K562 (cell line): ENCODE measurements at regions of chr2 and their contacts with region 1.

Region 1: DNA sequence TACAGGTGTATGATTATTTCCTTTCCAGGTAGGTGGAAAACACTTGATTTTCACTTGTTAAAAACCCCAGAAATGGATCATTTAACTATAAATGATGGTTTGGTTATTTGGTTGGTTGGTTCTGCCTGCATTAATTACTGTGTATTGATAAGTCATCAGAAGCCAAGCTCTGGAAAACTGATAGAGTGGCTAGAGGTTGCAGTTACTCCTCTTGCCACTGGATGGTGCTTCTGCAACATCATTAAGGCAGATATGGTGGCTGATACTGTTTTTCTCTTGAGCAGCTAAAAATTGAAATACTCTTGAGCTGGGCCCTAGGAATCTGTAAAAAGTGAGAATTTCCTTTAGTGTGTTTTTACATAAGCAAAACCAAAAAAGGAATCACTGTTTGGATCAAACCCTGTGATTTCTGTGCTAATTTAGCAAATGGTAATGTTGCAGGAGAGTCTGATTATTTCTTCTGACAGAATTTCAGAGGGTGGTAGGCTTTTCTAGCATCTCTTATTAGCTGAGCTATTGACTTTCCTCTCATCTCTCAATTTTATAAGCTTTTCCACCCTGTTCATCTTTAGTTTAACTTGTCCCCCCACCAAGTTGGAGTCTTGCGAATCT is 54.3 kb downstream of the RAB10 start:
- DNase-seq: peak; percentile 44 to 57 (median 50)
- ATAC-seq: peak; percentile 84
- H3K4me3 ChIP-seq: no peak overlapping the region
- H3K27ac ChIP-seq: no peak overlapping the region
- H3K4me1 ChIP-seq: peaks cover 2 to 8% of the 10 kb centered on the region in 2 experiments; a peak in 4 of 5 replicates
- H3K27me3 ChIP-seq: no peaks in the 10 kb centered on the region
- CTCF ChIP-seq: peak; percentile 55 to 74 (median 66)
- EP300 ChIP-seq: no peak
- POLR2A ChIP-seq: no peak
- RAD21 ChIP-seq: peak; percentile 36 to 64

Region 2: DNA sequence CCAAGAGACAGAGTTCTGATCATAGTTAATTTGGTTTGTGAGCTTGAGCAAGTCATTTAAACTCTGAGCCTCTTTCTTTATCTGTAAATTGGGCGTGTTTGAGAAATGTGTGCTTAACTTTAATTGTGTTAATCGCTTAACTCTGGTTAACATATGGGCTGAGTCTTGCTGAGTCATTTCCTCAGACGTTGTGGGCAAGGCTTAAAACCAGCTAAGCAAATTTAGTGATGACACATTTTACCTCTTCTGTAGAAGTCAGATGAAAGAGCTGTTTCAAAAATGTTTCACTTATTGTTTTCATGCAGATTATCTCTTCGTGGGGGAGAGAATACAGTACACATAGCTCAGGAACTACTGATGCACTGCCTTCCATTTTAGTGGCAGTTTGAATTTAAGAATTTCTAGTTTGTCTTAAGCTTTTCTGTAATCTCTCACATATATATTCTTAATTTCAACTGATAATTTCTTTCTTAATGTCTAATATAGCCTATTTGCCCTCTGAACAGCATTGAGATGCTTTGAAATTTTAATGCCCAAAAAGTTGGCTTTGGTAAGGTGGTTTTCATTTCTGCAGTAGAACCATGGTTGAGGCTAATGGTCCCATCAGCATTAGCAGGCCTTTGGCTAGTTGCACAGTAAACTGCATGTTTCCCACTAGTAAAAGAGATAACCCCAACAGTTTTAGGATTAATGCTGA is 19.4 kb before region 1 on chr2:
- CTCF ChIA-PET with region 1: no interaction called
- POLR2A ChIA-PET with region 1: interaction called, 17 read pairs
- in situ Hi-C with region 1: no loop called
- intact Hi-C with region 1: no loop called
- DNase-seq: peak; percentile 64 to 95 (median 73)
- ATAC-seq: peak; percentile 71
- H3K4me3 ChIP-seq: no peak overlapping the region; the same call in 1 of the 2 replicates
- H3K27ac ChIP-seq: peak overlapping the region; percentile 98
- H3K4me1 ChIP-seq: peaks cover 32 to 77% of the 10 kb centered on the region in 2 experiments
- H3K27me3 ChIP-seq: no peaks in the 10 kb centered on the region
- CTCF ChIP-seq: no peak
- EP300 ChIP-seq: peak; percentile 98
- POLR2A ChIP-seq: peak; percentile 49
- RAD21 ChIP-seq: 0 out of 4 replicates have a peak, but pooled peaks of 1 of the 2 experiments have one; percentile 4